Activated CD4-positive, alpha-beta memory T cell treated with anti-CD3 and anti-CD28 coated beads for 36 hours (primary cell): ENCODE measurements at regions of chr13 and their contacts with region 1.

Region 1: DNA sequence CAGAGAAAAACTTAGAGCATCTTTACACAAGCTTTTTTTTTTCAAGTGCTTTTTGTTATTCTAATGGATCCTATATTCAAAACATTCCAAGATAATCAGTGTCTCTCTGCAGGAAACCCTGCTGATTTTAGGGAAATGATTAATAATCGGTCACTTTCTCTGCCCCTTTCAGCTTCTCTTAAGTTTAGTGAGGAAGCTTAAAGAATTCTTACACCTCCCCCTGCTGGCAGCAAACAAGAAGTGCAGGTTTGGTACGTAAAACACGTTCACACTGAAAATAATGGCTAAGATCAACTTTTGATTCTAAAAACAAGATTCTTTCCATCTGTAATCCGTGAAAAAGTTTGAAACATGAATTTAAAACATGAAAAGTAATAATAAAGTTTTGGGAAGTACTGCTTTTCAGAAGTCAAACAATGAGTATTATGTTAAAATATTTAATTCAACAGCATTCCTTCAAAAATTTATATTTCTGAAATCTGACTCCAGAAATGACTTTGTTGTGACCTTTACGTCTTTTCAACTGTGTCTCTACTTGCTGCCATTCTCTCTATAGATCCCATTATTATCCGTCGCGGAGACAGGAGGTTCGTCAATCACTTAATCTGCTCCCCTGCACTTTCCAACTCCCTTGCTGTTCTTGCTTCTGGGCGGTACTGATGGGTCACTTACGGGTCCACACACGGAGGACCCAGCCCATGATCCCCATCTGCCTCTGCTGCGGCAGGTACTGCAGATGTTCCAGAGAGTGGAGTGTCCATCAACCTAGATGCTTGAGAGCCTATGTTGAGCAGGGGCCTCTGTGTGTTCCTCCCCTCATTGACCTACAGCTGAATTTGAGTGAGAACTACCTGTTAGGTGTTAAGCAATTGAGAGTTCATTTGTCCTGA is 203.1 kb upstream of the EDNRB start:
- DNase-seq: peak; percentile 36
- H3K4me3 Mint-ChIP-seq: no peak overlapping the region
- H3K27ac Mint-ChIP-seq: no peak overlapping the region
- H3K4me1 Mint-ChIP-seq: no peaks in the 10 kb centered on the region
- H3K27me3 Mint-ChIP-seq: peaks cover 3% of the 10 kb centered on the region

Region 2: GRCh38 chr13:77599351-77599750 is 522.4 kb before region 1 on chr13:
- CTCF ChIA-PET with region 1: interaction called, 4 read pairs
- POLR2A ChIA-PET with region 1: no interaction called
- intact Hi-C with region 1: loop called (anchors 5 kb)
- DNase-seq: no peak
- H3K4me3 Mint-ChIP-seq: no peak overlapping the region
- H3K27ac Mint-ChIP-seq: no peak overlapping the region
- H3K4me1 Mint-ChIP-seq: no peaks in the 10 kb centered on the region
- H3K27me3 Mint-ChIP-seq: peaks cover 3% of the 10 kb centered on the region

Region 3: DNA sequence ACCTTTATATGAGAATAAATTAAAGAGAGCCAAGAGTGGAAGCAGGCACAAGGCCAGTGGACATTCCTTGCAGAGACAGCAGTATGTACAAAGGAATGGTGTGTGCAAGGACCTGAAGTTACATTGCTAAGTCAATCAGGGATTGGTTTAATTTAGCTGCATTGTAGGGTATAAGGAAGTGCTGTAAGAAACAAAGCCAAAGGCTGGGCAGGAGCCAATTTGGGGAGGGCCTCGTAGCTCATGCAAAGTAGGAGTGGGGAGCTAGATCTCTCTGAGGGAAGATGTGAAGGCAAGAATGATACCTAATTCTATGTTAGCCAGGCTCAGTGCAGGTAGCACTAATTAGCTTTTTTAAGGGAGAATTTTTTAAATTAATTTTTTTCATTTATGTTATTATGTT is 347.5 kb before region 1 on chr13:
- CTCF ChIA-PET with region 1: interaction called, 35 read pairs
- POLR2A ChIA-PET with region 1: no interaction called
- intact Hi-C with region 1: loop called (anchors 1 kb)
- DNase-seq: no peak
- H3K4me3 Mint-ChIP-seq: no peak overlapping the region
- H3K27ac Mint-ChIP-seq: no peak overlapping the region
- H3K4me1 Mint-ChIP-seq: peaks cover 3% of the 10 kb centered on the region
- H3K27me3 Mint-ChIP-seq: no peaks in the 10 kb centered on the region

Region 4: GRCh38 chr13:77779552-77780272 is 342.0 kb before region 1 on chr13:
- CTCF ChIA-PET with region 1: interaction called, 35 read pairs
- POLR2A ChIA-PET with region 1: no interaction called
- intact Hi-C with region 1: loop called (anchors 1 kb)
- DNase-seq: peak; percentile 17
- H3K4me3 Mint-ChIP-seq: no peak overlapping the region
- H3K27ac Mint-ChIP-seq: no peak overlapping the region
- H3K4me1 Mint-ChIP-seq: peaks cover 9% of the 10 kb centered on the region
- H3K27me3 Mint-ChIP-seq: no peaks in the 10 kb centered on the region

Region 5: DNA sequence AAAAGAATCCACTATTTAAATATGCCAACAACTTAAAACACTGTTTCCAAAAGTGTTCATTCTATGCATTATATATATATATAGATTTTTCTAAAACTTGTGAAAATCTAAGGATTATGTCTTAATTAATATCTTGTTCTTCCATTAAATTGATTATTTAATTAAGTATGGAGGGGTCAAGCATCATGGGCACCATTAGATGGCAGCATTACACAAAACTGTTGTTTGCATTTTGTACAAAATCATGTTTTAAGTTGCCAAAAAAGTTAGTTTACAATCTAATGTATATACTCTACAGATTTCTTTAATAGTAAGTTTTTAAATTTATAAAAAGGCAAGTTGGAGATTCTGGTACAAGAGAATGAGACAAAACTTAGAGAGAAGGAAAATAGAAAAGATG is 10.1 kb after region 1 on chr13:
- CTCF ChIA-PET with region 1: interaction called, 18 read pairs
- POLR2A ChIA-PET with region 1: no interaction called
- intact Hi-C with region 1: no loop called
- DNase-seq: no peak
- H3K4me3 Mint-ChIP-seq: no peak overlapping the region
- H3K27ac Mint-ChIP-seq: no peak overlapping the region
- H3K4me1 Mint-ChIP-seq: no peaks in the 10 kb centered on the region
- H3K27me3 Mint-ChIP-seq: peaks cover 5% of the 10 kb centered on the region

Region 6: GRCh38 chr13:78137404-78138142 is 15.9 kb after region 1 on chr13:
- CTCF ChIA-PET with region 1: interaction called, 12 read pairs
- POLR2A ChIA-PET with region 1: no interaction called
- intact Hi-C with region 1: no loop called
- DNase-seq: peak; percentile 12
- H3K4me3 Mint-ChIP-seq: no peak overlapping the region
- H3K27ac Mint-ChIP-seq: no peak overlapping the region
- H3K4me1 Mint-ChIP-seq: peaks cover 3% of the 10 kb centered on the region
- H3K27me3 Mint-ChIP-seq: no peaks in the 10 kb centered on the region

Region 7: DNA sequence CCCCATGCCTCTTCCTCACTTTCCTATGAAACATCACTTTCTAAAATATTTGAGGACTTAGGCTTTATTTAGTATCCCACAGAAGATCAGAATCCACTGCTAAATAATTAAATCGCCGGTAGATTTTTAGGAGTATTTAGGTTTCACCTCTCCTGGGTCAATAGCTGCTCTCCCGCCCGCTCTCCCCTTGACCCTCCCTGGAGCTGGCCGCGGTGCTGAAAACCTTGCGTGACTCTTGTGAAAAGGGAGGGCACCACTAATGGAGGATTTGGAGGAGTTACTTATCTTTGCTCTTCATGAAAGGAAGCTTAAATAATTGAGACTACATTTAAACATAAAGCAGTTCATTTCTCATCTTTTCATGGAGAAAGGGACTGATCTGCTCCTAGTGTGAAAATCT is 467.5 kb after region 1 on chr13:
- CTCF ChIA-PET with region 1: no interaction called
- POLR2A ChIA-PET with region 1: no interaction called
- intact Hi-C with region 1: no loop called
- DNase-seq: no peak
- H3K4me3 Mint-ChIP-seq: no peak overlapping the region
- H3K27ac Mint-ChIP-seq: no peak overlapping the region
- H3K4me1 Mint-ChIP-seq: peaks cover 3% of the 10 kb centered on the region
- H3K27me3 Mint-ChIP-seq: peaks cover 65% of the 10 kb centered on the region